ENCODE measurements at regions of chr2 and their contacts with region 1.

Region 1: DNA sequence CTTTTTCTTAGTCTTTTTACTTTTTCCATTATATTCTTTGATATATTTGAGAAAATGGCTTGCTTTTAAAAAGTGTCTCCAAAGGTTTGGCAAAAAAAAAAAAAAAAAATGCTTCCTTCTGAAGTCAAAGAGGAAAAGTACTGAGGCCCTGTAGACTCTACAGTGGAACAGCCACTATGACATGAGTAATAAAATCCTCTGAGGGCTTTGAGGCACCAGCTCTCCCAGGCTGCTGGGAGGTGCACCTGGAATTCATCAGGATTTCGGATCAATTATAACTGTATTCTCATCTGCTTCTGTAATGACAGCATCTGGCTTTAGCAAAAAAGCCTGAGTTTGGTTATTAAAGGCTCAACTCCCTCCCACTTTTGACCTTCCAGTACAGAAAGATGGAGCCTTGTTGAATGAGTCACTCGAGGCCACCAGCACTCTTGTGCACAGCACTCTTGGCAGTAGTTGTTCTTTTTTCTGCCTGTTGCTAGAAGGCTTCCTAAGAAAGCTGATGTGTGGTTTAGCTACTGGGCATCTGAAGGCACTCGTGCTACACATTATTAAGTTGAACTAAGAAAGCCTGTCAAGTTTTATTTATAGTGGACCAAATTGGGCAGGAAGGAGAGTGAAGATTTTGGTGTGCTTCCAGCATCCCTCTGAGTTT is 131.3 kb downstream of the PRPF40A start:
- DNase-seq: peak in 2 of 10 donors; percentile 41 to 50
- H3K4me3 ChIP-seq: no peak overlapping the region
- H3K27ac ChIP-seq: peak overlapping the region in 50 of 59 donors; percentile 2 to 96 (median 62)
- H3K27me3 ChIP-seq: no peaks in the 10 kb centered on the region
- CTCF ChIP-seq: no peak

Region 2: GRCh38 chr2:152513681-152514080 is 72.3 kb before region 1 on chr2:
- intact Hi-C with region 1: no loop called
- DNase-seq: peak in 1 of 10 donors; percentile 86
- H3K4me3 ChIP-seq: no peak overlapping the region
- H3K27ac ChIP-seq: peak overlapping the region in 47 of 59 donors; percentile 0 to 98 (median 51)
- H3K27me3 ChIP-seq: no peaks in the 10 kb centered on the region
- CTCF ChIP-seq: no peak

Region 3: GRCh38 chr2:152620208-152620607 is 34.3 kb after region 1 on chr2:
- intact Hi-C with region 1: loop called in 1 of 2 experiments (anchors 5 kb)
- DNase-seq: no peak
- H3K4me3 ChIP-seq: no peak overlapping the region
- H3K27ac ChIP-seq: peak overlapping the region in 57 of 59 donors; percentile 4 to 90 (median 69)
- H3K27me3 ChIP-seq: no peaks in the 10 kb centered on the region
- CTCF ChIP-seq: no peak

Measured in dorsolateral prefrontal cortex (tissue), 120 donors.